Transverse colon (tissue), 4 donors: ENCODE measurements at regions of chr18 and their contacts with region 1.

Region 1: GRCh38 chr18:12470382-12471075 is 62.8 kb downstream of the PRELID3A start:
- DNase-seq: no peak
- H3K4me3 ChIP-seq: no peak overlapping the region
- H3K27ac ChIP-seq: no peak overlapping the region
- H3K4me1 ChIP-seq: no peaks in the 10 kb centered on the region
- H3K27me3 ChIP-seq: no peaks in the 10 kb centered on the region
- CTCF ChIP-seq: no peak
- EP300 ChIP-seq: no peak
- POLR2A ChIP-seq: no peak

Region 2: GRCh38 chr18:12531749-12532148 is 61.2 kb after region 1 on chr18:
- in situ Hi-C with region 1: loop called in 1 of 4 experiments (anchors 10 kb)
- intact Hi-C with region 1: no loop called
- DNase-seq: no peak
- H3K4me3 ChIP-seq: no peak overlapping the region
- H3K27ac ChIP-seq: no peak overlapping the region
- H3K4me1 ChIP-seq: no peaks in the 10 kb centered on the region
- H3K27me3 ChIP-seq: no peaks in the 10 kb centered on the region
- CTCF ChIP-seq: no peak
- EP300 ChIP-seq: no peak
- POLR2A ChIP-seq: no peak